HCT116 (cell line): ENCODE measurements at regions of chr10 and their contacts with region 1.

Region 1: GRCh38 chr10:11793762-11794479 is 29.2 kb upstream of the PROSER2 start:
- DNase-seq: peak; percentile 86
- ATAC-seq: peak; percentile 86
- H3K4me3 ChIP-seq: peak overlapping the region; percentile 5 to 42
- H3K27ac ChIP-seq: peak overlapping the region; percentile 68
- H3K4me1 ChIP-seq: peaks cover 14 to 45% of the 10 kb centered on the region in 2 experiments
- H3K27me3 ChIP-seq: no peaks in the 10 kb centered on the region
- CTCF ChIP-seq: no peak; a peak in 1 of 6 replicates
- POLR2A ChIP-seq: no peak
- RAD21 ChIP-seq: no peak; the same call in 1 of the 2 replicates

Region 2: GRCh38 chr10:11454958-11455566 is 338.9 kb before region 1 on chr10:
- CTCF ChIA-PET with region 1: no interaction called
- POLR2A ChIA-PET with region 1: no interaction called
- RAD21 ChIA-PET with region 1: no interaction called
- intact Hi-C with region 1: no loop called
- DNase-seq: no peak
- ATAC-seq: peak; percentile 64; the same call in 1 of the 2 replicates
- H3K4me3 ChIP-seq: no peak overlapping the region
- H3K27ac ChIP-seq: no peak overlapping the region
- H3K4me1 ChIP-seq: no peaks in the 10 kb centered on the region
- H3K27me3 ChIP-seq: no peaks in the 10 kb centered on the region
- CTCF ChIP-seq: peak in 2 of 3 experiments; percentile 44 to 48; a peak in 4 of 6 replicates
- POLR2A ChIP-seq: no peak
- RAD21 ChIP-seq: no peak

Region 3: GRCh38 chr10:11539191-11539868 is 254.6 kb before region 1 on chr10:
- CTCF ChIA-PET with region 1: no interaction called
- POLR2A ChIA-PET with region 1: no interaction called
- RAD21 ChIA-PET with region 1: no interaction called
- intact Hi-C with region 1: no loop called
- DNase-seq: peak; percentile 46
- ATAC-seq: peak; percentile 73
- H3K4me3 ChIP-seq: no peak overlapping the region; a peak in 1 of 4 replicates
- H3K27ac ChIP-seq: no peak overlapping the region
- H3K4me1 ChIP-seq: peaks cover 9 to 23% of the 10 kb centered on the region in 2 experiments
- H3K27me3 ChIP-seq: no peaks in the 10 kb centered on the region
- CTCF ChIP-seq: no peak
- POLR2A ChIP-seq: no peak
- RAD21 ChIP-seq: 0 out of 2 replicates have a peak, but pooled peaks have one; percentile 7

Region 4: DNA sequence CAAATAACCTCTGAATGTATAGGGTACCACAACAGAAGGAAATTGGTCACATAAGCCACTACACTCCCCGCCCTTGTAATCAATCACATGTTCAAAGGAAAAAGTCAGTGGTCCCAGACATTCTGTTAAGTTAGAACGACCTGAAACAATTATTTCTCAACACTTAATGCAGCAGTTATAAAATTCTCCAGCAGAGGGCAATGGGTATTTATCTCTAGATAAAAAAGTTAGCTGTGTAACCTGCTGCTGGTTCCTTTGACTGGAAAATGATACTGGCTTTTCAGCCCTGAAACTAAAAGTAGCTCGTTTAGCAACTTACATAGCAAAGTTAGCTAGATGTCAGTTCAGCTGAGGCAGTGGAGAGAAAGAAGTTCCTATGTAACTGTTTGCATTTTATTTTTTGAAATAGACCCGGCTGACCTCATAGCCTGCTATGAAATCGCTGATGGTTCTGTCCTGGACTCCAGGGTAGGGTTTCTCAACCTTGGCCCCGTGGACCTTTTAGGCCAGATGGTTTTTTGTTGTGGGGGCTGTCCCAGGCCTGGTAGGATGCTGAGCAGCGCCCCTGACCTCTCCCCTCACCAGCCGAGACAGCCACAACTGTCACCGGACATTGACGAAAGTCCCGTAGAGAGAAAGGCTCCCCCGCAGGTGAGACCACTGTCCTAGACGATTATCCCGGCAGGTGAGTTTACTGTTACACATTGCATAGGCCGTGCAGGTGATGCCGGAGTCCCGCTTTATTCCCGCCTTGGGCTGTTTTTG is 10.9 kb before region 1 on chr10:
- CTCF ChIA-PET with region 1: interaction called, 22 read pairs
- POLR2A ChIA-PET with region 1: interaction called, 11 read pairs
- RAD21 ChIA-PET with region 1: no interaction called
- intact Hi-C with region 1: no loop called
- DNase-seq: peak; percentile 51
- ATAC-seq: peak; percentile 83
- H3K4me3 ChIP-seq: no peak overlapping the region
- H3K27ac ChIP-seq: no peak overlapping the region
- H3K4me1 ChIP-seq: peaks cover 0 to 9% of the 10 kb centered on the region in 2 experiments; a peak in 1 of 4 replicates
- H3K27me3 ChIP-seq: no peaks in the 10 kb centered on the region
- CTCF ChIP-seq: peak; percentile 67 to 81 (median 75)
- POLR2A ChIP-seq: no peak
- RAD21 ChIP-seq: peak; percentile 86

Region 5: GRCh38 chr10:11823122-11823988 is 29.4 kb after region 1 on chr10 and contains the start of gene PROSER2:
- CTCF ChIA-PET with region 1: interaction called, 13 read pairs
- POLR2A ChIA-PET with region 1: interaction called, 4 read pairs
- RAD21 ChIA-PET with region 1: interaction called in 1 of 2 experiments, 3 read pairs
- intact Hi-C with region 1: loop called (anchors 2 kb)
- DNase-seq: peak; percentile 27
- ATAC-seq: peak; percentile 85
- H3K4me3 ChIP-seq: peak within 1 kb of the TSS; percentile 80 to 89
- H3K27ac ChIP-seq: peak within 1 kb of the TSS; percentile 73; the same call in 1 of the 2 replicates
- H3K4me1 ChIP-seq: peaks cover 15 to 62% of the 10 kb centered on the region in 2 experiments
- H3K27me3 ChIP-seq: no peaks in the 10 kb centered on the region
- CTCF ChIP-seq: peak in 1 of 3 experiments; percentile 4; a peak in 1 of 6 replicates
- POLR2A ChIP-seq: peak; percentile 75
- RAD21 ChIP-seq: no peak
- total RNA-seq, gene PROSER2: 46.2 TPM

Region 6: GRCh38 chr10:12129222-12130111 is 335.5 kb after region 1 on chr10 and contains the start of gene SEC61A2:
- CTCF ChIA-PET with region 1: no interaction called
- POLR2A ChIA-PET with region 1: no interaction called
- RAD21 ChIA-PET with region 1: no interaction called
- intact Hi-C with region 1: loop called (anchors 2 kb)
- DNase-seq: peak; percentile 73
- ATAC-seq: peak; percentile 90
- H3K4me3 ChIP-seq: peak within 1 kb of the TSS; percentile 64 to 73
- H3K27ac ChIP-seq: peak within 1 kb of the TSS; percentile 90
- H3K4me1 ChIP-seq: peaks cover 2 to 22% of the 10 kb centered on the region in 2 experiments; a peak in 3 of 4 replicates
- H3K27me3 ChIP-seq: no peaks in the 10 kb centered on the region
- CTCF ChIP-seq: no peak
- POLR2A ChIP-seq: peak; percentile 9
- RAD21 ChIP-seq: no peak
- total RNA-seq, gene SEC61A2: 10.0 TPM

Region 7: DNA sequence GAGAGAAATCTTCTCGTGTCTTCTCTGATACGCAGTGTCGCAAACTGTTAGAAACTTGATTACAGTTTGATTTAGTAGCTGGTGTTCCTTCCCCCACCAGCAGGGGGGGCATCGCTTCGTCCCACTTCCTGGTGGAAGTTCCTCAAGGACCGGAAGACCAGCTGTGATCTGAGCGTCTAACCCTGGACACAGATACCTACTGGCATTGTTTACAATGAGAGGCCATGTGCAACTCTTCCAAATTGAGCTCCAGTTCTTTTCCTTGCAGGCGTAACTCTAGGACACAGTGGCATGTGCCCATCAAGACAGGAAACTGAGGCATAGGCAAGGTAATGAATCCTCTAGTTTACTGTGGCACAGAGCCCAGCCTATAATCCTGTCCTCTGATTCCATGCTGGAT is 988.6 kb after region 1 on chr10:
- CTCF ChIA-PET with region 1: no interaction called
- POLR2A ChIA-PET with region 1: no interaction called
- RAD21 ChIA-PET with region 1: no interaction called
- intact Hi-C with region 1: no loop called
- DNase-seq: peak; percentile 42
- ATAC-seq: peak; percentile 91
- H3K4me3 ChIP-seq: peak overlapping the region; percentile 20 to 27; a peak in 2 of 4 replicates
- H3K27ac ChIP-seq: no peak overlapping the region
- H3K4me1 ChIP-seq: peaks cover 2 to 9% of the 10 kb centered on the region in 2 experiments; a peak in 3 of 4 replicates
- H3K27me3 ChIP-seq: no peaks in the 10 kb centered on the region
- CTCF ChIP-seq: peak; percentile 50 to 94 (median 92); a peak in 5 of 6 replicates
- POLR2A ChIP-seq: no peak
- RAD21 ChIP-seq: peak; percentile 66